ENCODE measurements at regions of chrX and their contacts with region 1.

Region 1: DNA sequence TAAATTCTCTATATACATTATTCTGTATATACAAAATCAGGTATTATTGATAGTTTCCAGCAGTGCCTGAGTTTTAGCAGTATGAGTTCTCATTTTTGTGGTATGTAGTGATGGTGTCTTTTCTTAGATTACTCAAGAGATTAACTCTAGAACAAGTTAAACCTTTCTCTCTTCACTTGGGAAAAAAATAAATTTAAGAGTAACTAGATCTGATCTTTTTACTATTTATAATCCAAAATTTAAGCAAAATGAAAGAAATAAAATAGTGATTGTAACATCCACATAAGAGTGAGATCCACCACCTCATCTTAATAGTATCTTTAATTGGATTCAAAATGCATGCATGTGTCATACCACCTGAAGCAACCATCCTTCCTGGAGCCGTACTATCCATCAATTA is 124.1 kb upstream of the DDX3X start:
- DNase-seq: no peak
- ATAC-seq: no peak
- H3K4me3 ChIP-seq: no peak overlapping the region
- H3K27ac ChIP-seq: no peak overlapping the region
- H3K4me1 ChIP-seq: no peaks in the 10 kb centered on the region
- H3K27me3 ChIP-seq: no peaks in the 10 kb centered on the region
- CTCF ChIP-seq: no peak
- EP300 ChIP-seq: no peak
- POLR2A ChIP-seq: no peak
- RAD21 ChIP-seq: no peak

Region 2: DNA sequence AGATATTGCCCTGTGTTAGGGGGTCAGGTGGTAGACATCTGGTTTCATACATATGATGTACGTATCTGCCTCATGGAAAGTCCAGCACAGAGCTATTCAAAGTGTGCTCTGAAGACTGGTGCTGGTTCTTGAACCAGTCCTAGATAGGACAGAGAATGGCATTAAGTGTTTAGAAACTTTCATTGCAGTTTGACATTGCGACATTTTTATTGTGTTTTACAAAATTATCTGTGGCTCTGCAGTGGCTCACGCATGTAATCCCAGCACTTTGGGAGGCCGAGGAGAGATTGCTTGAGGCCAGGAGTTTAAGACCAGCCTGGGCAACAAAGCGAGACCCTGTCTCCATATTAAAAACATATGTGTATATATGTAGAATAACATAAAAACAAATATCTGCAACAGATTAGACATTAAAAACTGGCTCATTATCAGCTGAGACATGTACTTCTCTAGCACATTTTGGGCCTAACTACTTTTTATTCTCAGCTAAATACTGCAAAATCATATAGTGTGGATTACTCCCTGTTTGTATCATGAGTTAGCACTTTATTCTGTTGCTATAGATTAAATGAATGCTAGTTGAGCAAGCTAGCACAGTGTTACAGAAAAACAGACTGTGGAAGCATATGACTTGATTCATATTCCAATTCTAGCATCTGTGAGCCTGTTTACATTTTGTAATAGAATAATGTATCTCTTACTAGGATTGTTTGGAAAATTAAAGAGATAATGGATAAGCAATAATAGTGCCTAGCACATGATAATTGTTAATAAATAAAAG is 67.5 kb before region 1 on chrX:
- CTCF ChIA-PET with region 1: no interaction called
- POLR2A ChIA-PET with region 1: no interaction called
- in situ Hi-C with region 1: no loop called
- intact Hi-C with region 1: loop called (anchors 2 kb)
- DNase-seq: no peak
- ATAC-seq: no peak
- H3K4me3 ChIP-seq: no peak overlapping the region
- H3K27ac ChIP-seq: no peak overlapping the region
- H3K4me1 ChIP-seq: no peaks in the 10 kb centered on the region
- H3K27me3 ChIP-seq: no peaks in the 10 kb centered on the region
- CTCF ChIP-seq: no peak
- EP300 ChIP-seq: no peak
- POLR2A ChIP-seq: no peak
- RAD21 ChIP-seq: no peak

Region 3: GRCh38 chrX:41153448-41153847 is 56.4 kb before region 1 on chrX:
- CTCF ChIA-PET with region 1: no interaction called
- POLR2A ChIA-PET with region 1: no interaction called
- in situ Hi-C with region 1: no loop called
- intact Hi-C with region 1: no loop called
- DNase-seq: no peak
- ATAC-seq: no peak
- H3K4me3 ChIP-seq: no peak overlapping the region
- H3K27ac ChIP-seq: no peak overlapping the region
- H3K4me1 ChIP-seq: no peaks in the 10 kb centered on the region
- H3K27me3 ChIP-seq: no peaks in the 10 kb centered on the region
- CTCF ChIP-seq: no peak
- EP300 ChIP-seq: no peak
- POLR2A ChIP-seq: no peak
- RAD21 ChIP-seq: no peak

Region 4: DNA sequence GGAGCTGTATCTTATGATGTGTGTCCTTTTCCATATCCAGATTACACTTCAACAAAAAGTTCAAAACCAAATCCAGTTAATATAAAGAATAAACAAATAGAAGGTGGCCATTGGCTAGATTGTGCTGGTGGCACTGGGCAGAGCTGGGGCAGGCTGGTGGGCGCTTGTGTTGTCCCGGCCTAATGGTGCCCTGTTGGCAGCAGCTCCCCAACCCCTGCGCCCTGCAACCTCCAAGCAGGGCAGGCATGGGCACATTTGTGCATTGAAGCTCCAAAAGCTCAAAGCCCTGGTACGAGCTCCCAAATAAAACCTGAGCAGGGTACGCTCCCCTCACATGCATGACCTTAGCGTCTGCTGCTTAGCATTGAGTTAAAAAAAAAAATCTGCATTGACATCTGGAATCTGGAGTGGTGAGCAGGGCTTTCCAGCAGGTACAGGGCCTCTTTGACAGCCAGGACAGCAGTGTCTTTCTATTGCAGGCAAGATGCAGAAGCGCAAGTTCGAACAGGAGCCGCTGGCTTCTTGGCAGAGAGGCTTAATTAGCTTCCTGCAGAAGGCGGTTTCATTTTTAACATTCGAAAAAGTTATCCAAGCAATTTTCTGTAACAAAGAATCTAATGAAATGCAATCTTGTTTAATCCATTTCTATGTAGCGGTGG is 211.3 kb after region 1 on chrX:
- CTCF ChIA-PET with region 1: no interaction called
- POLR2A ChIA-PET with region 1: no interaction called
- in situ Hi-C with region 1: no loop called
- intact Hi-C with region 1: no loop called
- DNase-seq: no peak
- ATAC-seq: no peak
- H3K4me3 ChIP-seq: no peak overlapping the region
- H3K27ac ChIP-seq: no peak overlapping the region
- H3K4me1 ChIP-seq: no peaks in the 10 kb centered on the region
- H3K27me3 ChIP-seq: no peaks in the 10 kb centered on the region
- CTCF ChIP-seq: no peak
- EP300 ChIP-seq: no peak
- POLR2A ChIP-seq: no peak
- RAD21 ChIP-seq: no peak